Dorsolateral prefrontal cortex (tissue), 120 donors: ENCODE measurements at regions of chr5 and their contacts with region 1.

Region 1: GRCh38 chr5:71475788-71476384 is 20.4 kb downstream of the BDP1 start:
- DNase-seq: no peak
- H3K4me3 ChIP-seq: no peak overlapping the region
- H3K27ac ChIP-seq: peak overlapping the region in 18 of 59 donors; percentile 5 to 48 (median 16)
- H3K27me3 ChIP-seq: no peaks in the 10 kb centered on the region
- CTCF ChIP-seq: peak in 55 of 56 donors; percentile 30 to 68 (median 54)

Region 2: DNA sequence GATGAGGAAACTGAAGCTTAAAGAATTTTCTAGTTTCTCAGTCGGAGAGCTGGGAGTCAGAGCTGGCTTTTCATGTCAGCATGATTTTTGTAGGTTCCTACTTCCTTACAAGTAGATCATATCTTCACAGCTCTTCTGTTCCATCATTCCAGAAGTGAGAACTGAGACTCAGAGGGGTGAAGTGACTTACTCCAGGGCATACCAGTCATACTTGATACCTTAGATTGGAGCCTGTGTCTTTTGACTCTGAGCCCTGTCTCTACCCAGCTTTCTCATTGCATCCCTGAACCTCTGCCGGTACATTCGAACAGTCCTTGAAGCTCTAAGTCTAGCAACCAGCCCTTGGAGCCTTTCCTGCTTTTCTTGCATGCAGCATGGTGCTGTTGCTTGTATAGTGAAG is 164.5 kb after region 1 on chr5:
- intact Hi-C with region 1: loop called in 1 of 2 experiments (anchors 10 kb)
- DNase-seq: no peak
- H3K4me3 ChIP-seq: no peak overlapping the region
- H3K27ac ChIP-seq: no peak overlapping the region
- H3K27me3 ChIP-seq: no peaks in the 10 kb centered on the region
- CTCF ChIP-seq: no peak

Region 3: GRCh38 chr5:71757590-71758543 is 282.0 kb after region 1 on chr5:
- intact Hi-C with region 1: loop called (anchors 5 to 10 kb)
- DNase-seq: peak in 9 of 10 donors; percentile 43 to 84 (median 69)
- H3K4me3 ChIP-seq: peak overlapping the region in 56 of 59 donors; percentile 2 to 65 (median 46)
- H3K27ac ChIP-seq: peak overlapping the region in 3 of 59 donors; percentile 5 to 58 (median 14)
- H3K27me3 ChIP-seq: no peaks in the 10 kb centered on the region
- CTCF ChIP-seq: peak in 55 of 56 donors; percentile 43 to 82 (median 69)